PC-9 (cell line): ENCODE measurements at regions of chr4 and their contacts with region 1.

Region 1: GRCh38 chr4:183011213-183011907 is 87.7 kb upstream of the WWC2 start:
- DNase-seq: no peak
- H3K4me3 ChIP-seq: no peak overlapping the region
- H3K27ac ChIP-seq: no peak overlapping the region
- H3K4me1 ChIP-seq: no peaks in the 10 kb centered on the region
- H3K27me3 ChIP-seq: peaks cover 84% of the 10 kb centered on the region
- CTCF ChIP-seq: no peak

Region 2: GRCh38 chr4:183053681-183054080 is 42.3 kb after region 1 on chr4:
- CTCF ChIA-PET with region 1: no interaction called
- POLR2A ChIA-PET with region 1: interaction called, 18 read pairs
- intact Hi-C with region 1: no loop called
- DNase-seq: no peak
- H3K4me3 ChIP-seq: no peak overlapping the region
- H3K27ac ChIP-seq: no peak overlapping the region
- H3K4me1 ChIP-seq: no peaks in the 10 kb centered on the region
- H3K27me3 ChIP-seq: no peaks in the 10 kb centered on the region
- CTCF ChIP-seq: no peak

Region 3: DNA sequence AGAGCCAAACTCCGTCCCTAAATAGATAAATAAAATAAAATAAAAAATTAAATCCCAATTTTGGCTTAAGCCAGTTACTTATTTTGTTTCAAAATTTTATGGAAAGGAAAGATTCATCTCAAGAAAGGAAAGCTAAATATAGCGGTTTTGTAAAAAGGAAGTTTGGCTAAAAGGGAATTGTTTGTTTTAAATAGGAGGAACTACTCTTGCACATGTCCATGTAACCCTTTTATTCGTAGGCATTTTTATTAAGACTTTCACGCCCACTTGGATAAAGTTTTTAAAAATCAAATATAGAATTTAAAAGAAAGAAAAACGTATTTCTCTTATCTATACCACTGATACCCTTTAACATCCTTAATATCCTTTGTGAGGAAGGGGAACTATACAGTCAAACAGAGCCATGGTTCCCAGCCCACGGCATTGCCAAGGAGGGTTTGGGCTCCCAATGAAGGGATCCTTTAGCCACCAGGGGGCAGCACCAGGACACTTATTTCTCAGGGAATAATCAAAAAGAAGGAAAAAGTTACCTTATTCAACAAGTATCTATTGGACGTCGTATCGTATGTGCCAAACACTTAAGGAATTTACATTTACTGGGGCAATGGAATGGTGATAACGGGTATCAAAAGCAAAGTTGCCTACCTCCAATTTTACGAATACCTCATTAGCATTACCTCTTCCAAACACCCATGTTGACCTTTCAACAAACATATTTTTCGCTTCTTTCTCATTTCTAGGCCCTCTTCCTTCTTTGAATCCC is 460.8 kb after region 1 on chr4:
- CTCF ChIA-PET with region 1: no interaction called
- POLR2A ChIA-PET with region 1: no interaction called
- intact Hi-C with region 1: no loop called
- DNase-seq: peak; percentile 46 to 72
- H3K4me3 ChIP-seq: no peak overlapping the region
- H3K27ac ChIP-seq: no peak overlapping the region
- H3K4me1 ChIP-seq: peaks cover 10% of the 10 kb centered on the region; the same call in 1 of the 2 replicates
- H3K27me3 ChIP-seq: no peaks in the 10 kb centered on the region
- CTCF ChIP-seq: peak; percentile 82

Region 4: GRCh38 chr4:183517781-183518180 is 506.4 kb after region 1 on chr4:
- CTCF ChIA-PET with region 1: no interaction called
- POLR2A ChIA-PET with region 1: no interaction called
- intact Hi-C with region 1: no loop called
- DNase-seq: no peak
- H3K4me3 ChIP-seq: no peak overlapping the region
- H3K27ac ChIP-seq: no peak overlapping the region
- H3K4me1 ChIP-seq: no peaks in the 10 kb centered on the region
- H3K27me3 ChIP-seq: no peaks in the 10 kb centered on the region
- CTCF ChIP-seq: no peak